Ascending aorta (tissue), 2 donors: ENCODE measurements at regions of chr20 and their contacts with region 1.

Region 1: DNA sequence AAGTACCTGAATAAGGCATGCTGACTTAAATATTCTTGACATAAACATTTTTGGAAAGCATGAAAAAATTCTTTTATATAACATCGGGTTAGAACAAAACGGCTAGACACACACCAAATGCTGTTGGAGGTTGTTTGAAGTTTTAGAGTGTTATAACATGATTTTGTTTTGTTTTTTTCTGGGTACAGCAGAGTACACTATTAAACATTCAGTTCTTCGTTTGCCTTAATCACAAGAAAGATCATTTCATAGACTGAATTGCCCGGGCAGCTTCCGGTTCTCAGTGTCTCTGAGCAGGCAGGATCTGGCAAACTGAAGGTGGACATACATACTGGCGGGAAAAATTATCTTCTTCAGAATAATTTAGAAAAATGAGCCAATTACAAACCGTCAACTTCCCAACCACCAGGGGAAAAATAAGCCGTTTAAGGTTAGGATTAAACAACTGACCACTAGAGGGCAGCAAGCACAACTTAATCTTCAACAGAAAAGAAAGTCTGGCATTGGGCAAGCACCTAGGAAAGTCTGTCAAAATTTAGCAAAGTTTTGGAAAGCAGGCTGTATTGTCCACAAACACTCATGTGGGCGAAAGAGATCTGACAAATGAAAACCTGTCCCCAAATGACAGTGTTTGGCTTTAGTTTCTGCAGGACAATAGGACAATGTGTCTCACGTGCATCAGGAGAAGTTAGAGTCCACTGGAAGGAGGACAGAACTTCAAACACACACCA is 15.0 kb downstream of the ZNF217 start:
- DNase-seq: peak in 1 of 2 donors; percentile 81
- H3K4me3 ChIP-seq: peak overlapping the region; percentile 11 to 28
- H3K27ac ChIP-seq: peak overlapping the region in 1 of 2 donors; percentile 75
- H3K4me1 ChIP-seq: peaks cover 10 to 21% of the 10 kb centered on the region in 2 donors
- H3K27me3 ChIP-seq: no peaks in the 10 kb centered on the region
- CTCF ChIP-seq: peak; percentile 67 to 96 (median 84)

Region 2: DNA sequence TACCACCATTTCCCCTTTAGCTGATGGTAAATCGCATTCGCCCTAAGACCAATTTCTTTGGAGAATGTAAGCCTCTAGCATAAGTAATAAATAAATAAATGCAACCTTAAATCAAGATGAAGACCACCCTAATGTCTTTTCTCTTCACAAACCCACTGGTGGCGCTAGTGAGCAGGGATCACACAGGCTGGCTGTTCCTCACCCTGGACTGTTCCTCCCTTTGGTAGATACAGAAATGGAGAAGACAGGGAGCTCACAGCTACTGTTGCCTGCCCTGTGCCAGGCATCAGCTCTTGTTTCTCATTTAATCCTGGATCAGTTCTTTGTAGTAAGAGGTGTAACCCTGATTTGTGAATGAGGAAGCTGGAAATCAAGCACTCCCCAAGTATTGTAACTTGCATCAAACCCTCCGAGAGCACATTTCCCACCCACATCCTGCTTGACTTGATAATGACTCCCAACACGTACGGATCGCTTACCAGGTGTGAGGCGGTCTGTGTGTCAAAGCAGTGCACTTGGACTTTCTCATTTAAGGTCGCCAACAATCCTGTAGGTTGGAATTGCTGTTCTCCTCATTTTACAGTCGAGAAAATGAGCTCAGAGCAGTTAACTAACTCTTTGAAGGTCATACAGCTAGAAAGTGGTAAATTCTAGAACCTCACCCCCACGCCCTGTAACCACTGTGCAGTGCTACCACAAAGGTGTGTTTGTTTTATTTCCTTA is 370.4 kb before region 1 on chr20:
- intact Hi-C with region 1: no loop called
- DNase-seq: no peak
- H3K4me3 ChIP-seq: no peak overlapping the region
- H3K27ac ChIP-seq: no peak overlapping the region
- H3K4me1 ChIP-seq: no peaks in the 10 kb centered on the region
- H3K27me3 ChIP-seq: no peaks in the 10 kb centered on the region
- CTCF ChIP-seq: no peak

Region 3: GRCh38 chr20:53773792-53774401 is 195.2 kb after region 1 on chr20:
- intact Hi-C with region 1: loop called (anchors 5 kb)
- DNase-seq: no peak
- H3K4me3 ChIP-seq: no peak overlapping the region
- H3K27ac ChIP-seq: peak overlapping the region; percentile 68 to 72
- H3K4me1 ChIP-seq: peaks cover 0 to 12% of the 10 kb centered on the region in 2 donors
- H3K27me3 ChIP-seq: no peaks in the 10 kb centered on the region
- CTCF ChIP-seq: no peak

Region 4: GRCh38 chr20:53915446-53916172 is 337.0 kb after region 1 on chr20:
- intact Hi-C with region 1: loop called (anchors 1 kb)
- DNase-seq: peak; percentile 87 to 98
- H3K4me3 ChIP-seq: peak overlapping the region; percentile 64 to 71
- H3K27ac ChIP-seq: peak overlapping the region; percentile 68 to 87
- H3K4me1 ChIP-seq: peaks cover 0 to 30% of the 10 kb centered on the region in 2 donors
- H3K27me3 ChIP-seq: no peaks in the 10 kb centered on the region
- CTCF ChIP-seq: peak; percentile 72 to 97 (median 96)

Region 5: DNA sequence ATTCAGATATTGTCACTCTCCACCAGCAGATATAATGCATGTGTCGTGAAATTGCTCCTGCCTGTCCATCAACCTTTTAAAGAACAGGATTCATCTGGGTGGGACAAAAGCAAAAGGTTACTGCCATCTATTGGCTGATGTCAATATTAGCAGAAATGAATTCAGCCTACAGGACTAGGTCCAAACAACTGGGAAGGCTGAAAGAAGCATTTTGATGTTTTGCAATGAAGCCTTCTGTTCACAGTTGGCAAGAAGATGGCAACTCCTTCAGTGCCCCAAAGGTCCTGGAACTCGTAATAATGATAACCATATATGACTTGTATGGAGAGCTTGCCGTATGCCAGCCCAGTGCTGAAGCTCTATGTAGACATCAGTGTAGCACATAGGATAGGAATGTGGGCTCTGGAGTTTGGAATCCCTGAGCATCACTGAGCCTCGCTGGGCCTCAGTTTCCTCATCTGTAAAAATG is 484.2 kb after region 1 on chr20:
- intact Hi-C with region 1: loop called (anchors 5 kb)
- DNase-seq: no peak
- H3K4me3 ChIP-seq: no peak overlapping the region
- H3K27ac ChIP-seq: no peak overlapping the region
- H3K4me1 ChIP-seq: no peaks in the 10 kb centered on the region
- H3K27me3 ChIP-seq: no peaks in the 10 kb centered on the region
- CTCF ChIP-seq: peak; percentile 34 to 75 (median 50)

Region 6: GRCh38 chr20:54649511-54649962 is 1070.9 kb after region 1 on chr20:
- intact Hi-C with region 1: loop called (anchors 5 kb)
- DNase-seq: peak in 1 of 2 donors; percentile 79
- H3K4me3 ChIP-seq: no peak overlapping the region
- H3K27ac ChIP-seq: no peak overlapping the region
- H3K4me1 ChIP-seq: no peaks in the 10 kb centered on the region
- H3K27me3 ChIP-seq: no peaks in the 10 kb centered on the region
- CTCF ChIP-seq: peak; percentile 37 to 70 (median 63)